ENCODE measurements at regions of chr3 and their contacts with region 1.

Region 1: GRCh38 chr3:141561426-141562034 is 74.7 kb downstream of the RASA2 start:
- DNase-seq: peak; percentile 53
- H3K4me3 ChIP-seq: no peak overlapping the region
- H3K27ac ChIP-seq: no peak overlapping the region
- H3K27me3 ChIP-seq: no peaks in the 10 kb centered on the region
- CTCF ChIP-seq: peak; percentile 100

Region 2: GRCh38 chr3:140455521-140456214 is 1105.9 kb before region 1 on chr3:
- CTCF ChIA-PET with region 1: no interaction called
- POLR2A ChIA-PET with region 1: no interaction called
- DNase-seq: no peak
- H3K4me3 ChIP-seq: no peak overlapping the region
- H3K27ac ChIP-seq: no peak overlapping the region
- H3K27me3 ChIP-seq: no peaks in the 10 kb centered on the region
- CTCF ChIP-seq: no peak

Region 3: GRCh38 chr3:141050576-141051442 is 510.7 kb before region 1 on chr3 and contains the start of gene SPSB4:
- CTCF ChIA-PET with region 1: no interaction called
- POLR2A ChIA-PET with region 1: no interaction called
- DNase-seq: no peak
- H3K4me3 ChIP-seq: peak within 1 kb of the TSS; percentile 35
- H3K27ac ChIP-seq: no peak within 1 kb of the TSS
- H3K27me3 ChIP-seq: peaks cover 48% of the 10 kb centered on the region
- CTCF ChIP-seq: no peak
- polyA plus RNA-seq, gene SPSB4: not detected in 2 replicates

Region 4: GRCh38 chr3:141303481-141304223 is 257.9 kb before region 1 on chr3:
- CTCF ChIA-PET with region 1: interaction called, 36 read pairs
- POLR2A ChIA-PET with region 1: no interaction called
- DNase-seq: peak; percentile 73
- H3K4me3 ChIP-seq: no peak overlapping the region
- H3K27ac ChIP-seq: no peak overlapping the region
- H3K27me3 ChIP-seq: no peaks in the 10 kb centered on the region
- CTCF ChIP-seq: peak; percentile 72

Region 5: GRCh38 chr3:141532609-141533008 is 28.9 kb before region 1 on chr3:
- CTCF ChIA-PET with region 1: no interaction called
- POLR2A ChIA-PET with region 1: no interaction called
- DNase-seq: no peak
- H3K4me3 ChIP-seq: no peak overlapping the region
- H3K27ac ChIP-seq: no peak overlapping the region
- H3K27me3 ChIP-seq: no peaks in the 10 kb centered on the region
- CTCF ChIP-seq: no peak

Region 6: GRCh38 chr3:141677701-141678100 is 116.2 kb after region 1 on chr3:
- CTCF ChIA-PET with region 1: no interaction called
- POLR2A ChIA-PET with region 1: no interaction called
- DNase-seq: no peak
- H3K4me3 ChIP-seq: no peak overlapping the region
- H3K27ac ChIP-seq: no peak overlapping the region
- H3K27me3 ChIP-seq: no peaks in the 10 kb centered on the region
- CTCF ChIP-seq: no peak

Measured in AG04450 (cell line).